Common myeloid progenitor, CD34-positive (primary cell): ENCODE measurements at regions of chr20 and their contacts with region 1.

Region 1: DNA sequence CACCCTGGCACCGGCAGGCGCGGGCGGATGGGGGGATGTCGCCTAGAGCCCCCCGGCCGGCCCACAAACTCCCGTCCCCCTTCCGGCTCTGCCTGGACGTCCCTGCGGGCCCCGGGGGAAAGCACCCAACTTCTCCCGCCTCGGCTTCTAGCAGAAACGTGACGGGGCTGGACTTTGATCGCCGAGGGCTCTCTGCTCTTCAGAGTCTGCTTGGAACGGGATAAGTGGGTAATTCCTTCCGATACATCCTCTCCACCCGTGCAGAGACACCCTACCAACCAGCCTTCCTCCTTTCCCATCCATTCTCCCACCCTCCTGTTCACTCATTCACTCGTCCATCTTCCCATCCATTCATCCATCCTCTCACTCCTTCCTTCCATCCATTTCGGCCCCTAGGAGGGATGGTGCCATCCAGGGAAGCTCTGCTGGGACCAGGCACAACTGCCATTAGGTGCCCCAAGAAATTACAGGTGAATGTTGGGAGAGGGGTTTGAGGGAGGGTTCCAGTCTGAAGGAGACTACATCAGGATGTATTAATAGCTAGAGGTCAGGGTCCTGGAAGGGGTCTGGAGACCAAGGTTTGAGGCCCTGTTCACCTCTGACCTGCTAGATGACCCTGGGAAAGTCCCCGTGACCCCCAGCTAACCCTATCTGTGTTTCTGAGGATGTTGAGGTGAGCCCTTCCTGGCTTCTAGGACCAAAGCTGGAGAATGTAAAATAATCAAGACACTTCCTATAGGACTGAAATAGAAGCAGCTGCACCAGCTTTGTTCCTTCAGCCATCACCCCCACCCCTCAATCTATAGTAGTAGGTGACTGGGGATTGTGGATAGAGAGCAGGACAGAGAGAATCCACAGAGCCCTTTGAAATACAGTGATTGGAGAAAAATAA is 538 bp downstream of the TTLL9 start:
- DNase-seq: no peak
- H3K4me3 ChIP-seq: peak overlapping the region; percentile 50 to 93 (median 77)
- H3K27ac ChIP-seq: no peak overlapping the region
- H3K4me1 ChIP-seq: peaks cover 0 to 36% (median 30%) of the 10 kb centered on the region in 4 experiments
- H3K27me3 ChIP-seq: no peaks in the 10 kb centered on the region

Region 2: GRCh38 chr20:31849455-31849925 is 21.5 kb before region 1 on chr20:
- CTCF ChIA-PET with region 1: interaction called, 10 read pairs
- POLR2A ChIA-PET with region 1: interaction called, 3 read pairs
- DNase-seq: no peak
- H3K4me3 ChIP-seq: no peak overlapping the region
- H3K27ac ChIP-seq: no peak overlapping the region
- H3K4me1 ChIP-seq: peaks cover 0 to 3% (median 1%) of the 10 kb centered on the region in 4 experiments
- H3K27me3 ChIP-seq: peaks cover 0 to 32% (median 11%) of the 10 kb centered on the region in 5 experiments

Region 3: DNA sequence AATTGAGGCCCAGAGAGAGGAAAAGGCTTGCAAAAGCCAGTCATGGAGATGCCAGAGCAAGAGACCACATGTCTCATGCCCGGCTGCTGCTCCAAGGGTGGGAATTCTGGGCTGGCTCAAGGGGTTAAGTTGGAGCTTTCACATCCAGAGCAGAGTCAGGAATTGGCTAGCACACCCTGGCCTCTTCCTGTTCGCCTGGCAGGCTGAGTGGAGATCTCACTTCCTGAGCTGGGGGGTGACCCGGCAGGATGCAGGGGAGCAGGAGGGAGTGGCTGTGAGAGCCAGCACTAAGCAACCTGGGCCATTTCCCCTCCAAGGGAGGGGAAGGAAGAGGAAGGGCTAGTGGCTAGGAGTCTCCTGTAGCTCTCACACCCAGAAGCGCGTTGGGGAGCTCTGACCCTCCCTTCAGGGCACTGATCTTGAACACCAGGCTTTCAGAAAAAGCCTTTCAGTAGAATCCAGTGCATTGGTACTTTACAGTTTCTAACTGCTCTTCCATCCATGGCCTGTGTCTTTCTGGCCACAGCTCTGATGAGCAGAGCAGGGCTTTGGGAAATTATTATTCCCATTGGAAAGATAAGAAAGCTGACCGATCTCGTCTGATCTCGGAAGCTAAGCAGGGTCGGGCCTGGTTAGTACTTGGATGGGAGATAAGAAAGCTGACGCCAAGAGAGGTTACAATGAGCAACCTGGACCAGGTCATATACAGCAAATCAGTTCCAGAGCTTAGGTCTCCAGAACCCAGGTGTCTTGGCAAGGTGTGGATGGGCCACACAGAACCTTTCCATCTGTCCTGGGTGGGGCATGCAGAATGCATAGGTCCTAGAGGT is 137.0 kb after region 1 on chr20:
- CTCF ChIA-PET with region 1: no interaction called
- POLR2A ChIA-PET with region 1: no interaction called
- DNase-seq: peak in 2 of 3 donors; percentile 14 to 22
- H3K4me3 ChIP-seq: peak overlapping the region in 1 of 7 experiments; percentile 11
- H3K27ac ChIP-seq: no peak overlapping the region
- H3K4me1 ChIP-seq: peaks cover 0 to 11% (median 9%) of the 10 kb centered on the region in 4 experiments
- H3K27me3 ChIP-seq: no peaks in the 10 kb centered on the region